AG04449 (cell line): ENCODE measurements at regions of chr7 and their contacts with region 1.

Region 1: DNA sequence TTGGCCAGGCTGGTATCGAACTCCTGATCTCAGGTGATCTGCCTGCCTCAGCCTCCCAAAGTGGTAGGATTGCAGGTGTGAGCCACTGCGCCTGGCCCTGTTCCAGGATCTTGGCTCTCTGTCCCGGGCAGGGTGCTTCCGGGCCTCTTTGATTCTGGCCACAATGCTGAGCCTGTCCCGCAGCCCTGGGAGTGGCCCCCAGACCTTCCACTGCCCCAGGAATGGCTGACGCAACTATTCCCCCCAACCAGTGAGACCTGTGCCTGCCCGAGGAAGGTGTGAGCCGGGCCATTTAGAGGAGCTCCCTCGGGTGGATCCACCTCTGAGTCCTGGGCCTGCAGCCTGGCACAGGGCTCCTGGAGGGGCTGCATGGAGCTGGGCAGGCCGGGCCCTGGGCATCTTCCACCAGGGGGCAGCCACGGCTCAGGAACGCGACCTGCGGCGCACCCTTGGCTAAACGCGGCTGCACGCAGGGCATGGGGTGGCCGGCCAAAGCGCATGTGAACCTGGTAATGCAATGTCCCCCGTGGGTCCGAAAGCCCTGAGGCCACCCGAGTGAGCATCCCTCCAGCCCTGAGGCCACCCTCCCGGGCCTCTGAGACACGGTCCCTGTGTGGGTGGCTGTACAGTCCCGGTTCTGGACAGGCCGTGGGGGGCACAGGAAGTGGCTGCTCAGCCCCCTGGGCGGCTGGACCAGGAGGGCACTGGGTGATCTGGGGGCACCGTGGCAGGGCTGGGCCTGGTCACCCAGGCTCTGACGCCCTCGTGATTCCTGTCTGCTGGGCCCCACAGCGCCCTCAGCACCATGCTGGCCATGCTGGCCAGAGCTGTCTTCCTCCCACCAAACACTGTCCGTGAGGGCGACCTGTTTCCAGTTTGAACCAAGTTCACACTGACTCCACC is 24.8 kb downstream of the GRIFIN start:
- DNase-seq: no peak
- H3K4me3 ChIP-seq: peak overlapping the region; percentile 38
- CTCF ChIP-seq: peak; percentile 99

Region 2: GRCh38 chr7:2436341-2437104 is 14.9 kb before region 1 on chr7:
- CTCF ChIA-PET with region 1: interaction called, 20 read pairs
- POLR2A ChIA-PET with region 1: interaction called, 3 read pairs
- DNase-seq: no peak
- H3K4me3 ChIP-seq: no peak overlapping the region
- CTCF ChIP-seq: no peak

Region 3: GRCh38 chr7:2471396-2471795 is 20.0 kb after region 1 on chr7:
- CTCF ChIA-PET with region 1: interaction called, 117 read pairs
- POLR2A ChIA-PET with region 1: no interaction called
- DNase-seq: no peak
- H3K4me3 ChIP-seq: no peak overlapping the region
- CTCF ChIP-seq: no peak

Region 4: DNA sequence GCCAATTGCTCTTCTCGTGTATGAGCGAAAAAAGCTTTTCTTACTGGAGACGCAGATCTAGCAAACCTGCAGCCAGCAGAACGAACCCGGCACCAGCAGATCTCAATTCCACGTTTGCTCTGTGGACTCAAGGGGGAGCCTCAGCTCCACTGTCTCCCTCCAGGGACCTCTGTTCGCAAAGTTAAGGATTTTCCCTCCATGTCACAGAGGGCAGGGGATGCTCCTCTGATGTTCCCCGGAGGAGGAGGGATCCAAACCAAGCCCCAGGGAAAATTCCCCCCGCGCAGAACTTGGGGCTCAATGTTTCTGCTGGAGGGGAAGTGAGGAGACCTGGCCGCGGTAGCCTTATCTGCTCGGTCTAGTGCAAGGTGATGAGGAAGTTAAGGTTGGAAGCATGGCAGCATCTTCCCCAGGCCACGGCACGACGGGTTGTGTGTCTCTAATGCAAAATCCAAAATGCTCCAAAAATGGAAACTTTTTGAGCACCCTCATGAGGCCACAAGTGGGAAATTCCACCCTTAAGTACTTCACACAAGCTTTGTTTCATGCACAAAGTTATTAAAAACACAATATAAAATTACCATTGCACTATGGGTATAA is 116.4 kb after region 1 on chr7:
- CTCF ChIA-PET with region 1: interaction called, 21 read pairs
- POLR2A ChIA-PET with region 1: no interaction called
- DNase-seq: no peak
- H3K4me3 ChIP-seq: no peak overlapping the region
- CTCF ChIP-seq: peak; percentile 77

Region 5: DNA sequence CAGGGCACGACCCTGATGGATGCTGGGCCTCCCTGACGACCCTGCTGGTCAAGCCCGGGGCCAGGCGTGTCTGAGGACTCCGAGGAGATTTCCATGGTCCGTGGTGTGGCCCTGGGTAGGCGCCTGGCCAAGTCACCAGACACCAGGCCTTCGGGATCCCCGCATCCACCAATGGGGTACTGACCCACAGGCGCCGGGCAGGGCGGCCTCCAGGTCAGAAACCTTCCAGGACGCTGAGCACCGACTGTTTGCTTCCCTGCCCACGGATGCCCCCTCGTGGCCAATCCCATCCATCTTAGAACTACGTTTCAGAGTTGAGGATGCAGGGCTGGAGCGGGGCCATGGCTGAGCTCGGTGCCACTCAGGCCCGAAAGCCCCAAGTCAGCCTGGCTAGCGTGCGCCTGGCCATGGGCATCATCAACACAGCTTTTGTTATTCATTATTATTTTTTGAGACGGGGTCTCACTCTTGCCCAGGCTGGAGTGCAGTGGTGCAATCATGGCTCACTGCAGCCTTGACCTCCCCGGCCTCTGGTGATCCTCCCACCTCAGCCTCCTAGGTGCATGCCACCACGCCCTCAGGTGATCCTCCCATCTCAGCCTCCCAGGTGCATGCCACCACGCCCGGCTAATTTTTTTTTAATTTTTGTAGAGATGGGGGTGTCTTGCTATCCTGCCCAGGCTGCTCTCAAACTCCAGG is 229.5 kb after region 1 on chr7:
- CTCF ChIA-PET with region 1: interaction called, 63 read pairs
- POLR2A ChIA-PET with region 1: no interaction called
- DNase-seq: no peak
- H3K4me3 ChIP-seq: no peak overlapping the region
- CTCF ChIP-seq: peak; percentile 85

Region 6: GRCh38 chr7:2800931-2801688 is 349.7 kb after region 1 on chr7:
- CTCF ChIA-PET with region 1: no interaction called
- POLR2A ChIA-PET with region 1: no interaction called
- DNase-seq: no peak
- H3K4me3 ChIP-seq: no peak overlapping the region
- CTCF ChIP-seq: no peak

Region 7: GRCh38 chr7:2870471-2870931 is 419.1 kb after region 1 on chr7:
- CTCF ChIA-PET with region 1: no interaction called
- POLR2A ChIA-PET with region 1: no interaction called
- DNase-seq: no peak
- H3K4me3 ChIP-seq: no peak overlapping the region
- CTCF ChIP-seq: no peak

Region 8: GRCh38 chr7:2886900-2887299 is 435.5 kb after region 1 on chr7:
- CTCF ChIA-PET with region 1: no interaction called
- POLR2A ChIA-PET with region 1: no interaction called
- DNase-seq: no peak
- H3K4me3 ChIP-seq: no peak overlapping the region
- CTCF ChIP-seq: peak; percentile 85